Activated T-helper 2 cell treated with anti-CD3 and anti-CD28 coated beads, Interferon-gamma antibody, Interleukin-2, Interleukin-4, amounts not matched to agents 10 μg/mL and 5 μg/mL and 100 μg/mL, durations not matched to agents 14 hours and 24 hours and 36 hours (primary cell): ENCODE measurements at regions of chrX and their contacts with region 1.

Region 1: GRCh38 chrX:78945186-78945912 is at the start of gene P2RY10:
- DNase-seq: peak; percentile 10
- H3K4me3 Mint-ChIP-seq: peak within 1 kb of the TSS; percentile 94
- H3K27ac Mint-ChIP-seq: peak within 1 kb of the TSS; percentile 94
- H3K4me1 Mint-ChIP-seq: peaks cover 35% of the 10 kb centered on the region
- H3K27me3 Mint-ChIP-seq: no peaks in the 10 kb centered on the region
- total RNA-seq, gene P2RY10: 55.6 and 65.7 TPM in 2 replicates

Region 2: GRCh38 chrX:78139160-78140123 is 805.9 kb before region 1 on chrX and contains the start of gene TAF9B:
- intact Hi-C with region 1: loop called (anchors 10 kb)
- DNase-seq: peak; percentile 80
- H3K4me3 Mint-ChIP-seq: peak within 1 kb of the TSS; percentile 88
- H3K27ac Mint-ChIP-seq: peak within 1 kb of the TSS; percentile 93
- H3K4me1 Mint-ChIP-seq: peaks cover 8% of the 10 kb centered on the region
- H3K27me3 Mint-ChIP-seq: no peaks in the 10 kb centered on the region
- total RNA-seq, gene TAF9B: 16.8 and 17.0 TPM in 2 replicates

Region 3: DNA sequence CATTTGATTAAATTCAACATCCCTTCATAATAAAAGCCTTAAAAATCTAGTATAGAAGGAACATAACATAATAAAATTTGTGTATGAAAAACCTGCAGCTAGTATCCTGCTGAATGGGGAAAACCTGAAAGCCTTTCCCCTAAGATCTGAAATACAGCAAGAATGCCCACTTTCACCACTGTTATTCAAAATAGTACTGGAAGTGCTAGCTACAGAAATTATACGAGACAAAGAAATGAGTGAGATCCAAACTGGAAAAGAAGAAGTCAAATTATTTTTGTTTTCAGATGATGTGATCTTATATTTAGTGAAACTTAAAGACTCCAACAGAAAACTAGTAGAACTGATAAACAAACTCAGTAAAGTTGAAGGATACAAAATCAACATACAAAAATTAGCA is 439.1 kb before region 1 on chrX:
- intact Hi-C with region 1: no loop called
- DNase-seq: no peak
- H3K4me3 Mint-ChIP-seq: no peak overlapping the region
- H3K27ac Mint-ChIP-seq: no peak overlapping the region
- H3K4me1 Mint-ChIP-seq: peaks cover 1% of the 10 kb centered on the region
- H3K27me3 Mint-ChIP-seq: no peaks in the 10 kb centered on the region

Region 4: DNA sequence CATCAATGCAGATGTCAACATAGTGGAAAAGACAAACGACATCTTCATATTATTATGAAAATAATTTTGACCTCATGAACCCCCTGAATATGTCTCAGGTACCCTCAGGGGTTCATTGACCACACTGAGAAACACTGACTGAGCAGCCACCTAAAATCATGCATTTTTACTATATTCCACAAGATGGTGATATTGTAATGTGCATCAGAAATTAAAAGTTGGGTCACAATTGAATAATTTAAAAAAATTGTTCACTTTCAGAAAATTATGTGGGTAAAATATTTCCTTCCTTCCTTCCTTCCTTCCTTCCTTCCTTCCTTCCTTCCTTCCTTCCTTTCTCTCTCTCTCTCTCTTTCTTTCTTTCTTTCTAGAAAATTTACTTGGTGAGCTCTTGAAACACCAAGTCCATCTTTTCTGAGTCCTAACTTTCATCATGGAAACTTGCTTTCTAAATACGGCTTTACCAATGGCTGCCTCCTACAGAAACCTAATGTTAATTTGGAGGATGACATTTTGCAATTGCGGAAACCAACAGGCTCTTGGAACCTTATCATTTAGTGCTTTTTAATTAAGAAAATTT is 389.9 kb before region 1 on chrX:
- intact Hi-C with region 1: loop called (anchors 10 kb)
- DNase-seq: no peak
- H3K4me3 Mint-ChIP-seq: no peak overlapping the region
- H3K27ac Mint-ChIP-seq: peak overlapping the region; percentile 38
- H3K4me1 Mint-ChIP-seq: peaks cover 5% of the 10 kb centered on the region
- H3K27me3 Mint-ChIP-seq: no peaks in the 10 kb centered on the region

Region 5: GRCh38 chrX:78957768-78958130 is 12.4 kb after region 1 on chrX:
- intact Hi-C with region 1: loop called (anchors 2 kb)
- DNase-seq: no peak
- H3K4me3 Mint-ChIP-seq: no peak overlapping the region
- H3K27ac Mint-ChIP-seq: peak overlapping the region; percentile 61
- H3K4me1 Mint-ChIP-seq: peaks cover 56% of the 10 kb centered on the region
- H3K27me3 Mint-ChIP-seq: no peaks in the 10 kb centered on the region

Region 6: GRCh38 chrX:79161655-79162054 is 216.3 kb after region 1 on chrX:
- intact Hi-C with region 1: loop called (anchors 5 kb)
- DNase-seq: peak; percentile 43
- H3K4me3 Mint-ChIP-seq: peak overlapping the region; percentile 89
- H3K27ac Mint-ChIP-seq: peak overlapping the region; percentile 99
- H3K4me1 Mint-ChIP-seq: peaks cover 54% of the 10 kb centered on the region
- H3K27me3 Mint-ChIP-seq: no peaks in the 10 kb centered on the region